ENCODE measurements at regions of chr2 and their contacts with region 1.

Region 1: GRCh38 chr2:136117909-136118818 is at the start of gene CXCR4:
- DNase-seq: peak; percentile 90
- H3K4me3 Mint-ChIP-seq: peak within 1 kb of the TSS; percentile 98
- H3K27ac Mint-ChIP-seq: peak within 1 kb of the TSS; percentile 97
- H3K4me1 Mint-ChIP-seq: peaks cover 43% of the 10 kb centered on the region
- H3K27me3 Mint-ChIP-seq: peaks cover 31% of the 10 kb centered on the region
- total RNA-seq, gene CXCR4: 202 to 212 TPM

Region 2: GRCh38 chr2:135960656-135961551 is 157.3 kb before region 1 on chr2:
- CTCF ChIA-PET with region 1: no interaction called
- POLR2A ChIA-PET with region 1: interaction called, 12 read pairs
- DNase-seq: peak; percentile 33
- H3K4me3 Mint-ChIP-seq: peak overlapping the region; percentile 53
- H3K27ac Mint-ChIP-seq: peak overlapping the region; percentile 92
- H3K4me1 Mint-ChIP-seq: peaks cover 58% of the 10 kb centered on the region
- H3K27me3 Mint-ChIP-seq: no peaks in the 10 kb centered on the region

Region 3: DNA sequence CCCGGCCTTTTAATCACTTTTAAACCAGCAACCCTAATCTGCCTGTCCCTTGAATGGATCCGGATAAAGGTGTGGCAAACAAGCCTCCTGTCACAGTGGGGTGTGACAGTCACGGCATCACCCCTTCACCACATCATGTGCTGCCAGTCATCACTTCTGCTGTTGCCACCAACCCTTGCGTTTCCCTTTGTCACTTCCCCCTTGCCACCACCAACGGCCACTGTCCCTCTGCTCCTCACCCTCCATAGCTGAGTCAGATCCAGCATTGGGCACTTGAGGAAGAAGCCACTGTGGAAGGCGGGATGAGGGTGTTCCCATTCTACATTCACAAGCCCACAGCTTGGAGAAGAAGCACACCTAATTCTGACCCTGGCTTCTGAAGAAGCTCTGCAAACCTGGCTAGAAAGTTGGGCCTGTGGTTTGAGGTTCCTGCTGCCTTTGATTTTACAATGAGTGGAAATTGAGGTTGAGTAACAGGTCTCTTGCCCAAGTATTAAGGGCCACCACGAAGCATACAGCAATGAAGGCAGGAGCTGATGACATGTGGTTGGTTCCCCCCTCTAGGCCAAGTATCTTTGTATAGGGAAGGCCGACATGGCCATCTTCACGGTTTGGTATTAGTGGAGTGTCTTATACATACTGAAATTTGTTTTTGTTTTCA is 109.8 kb before region 1 on chr2:
- CTCF ChIA-PET with region 1: no interaction called
- POLR2A ChIA-PET with region 1: interaction called, 16 read pairs
- DNase-seq: peak; percentile 90
- H3K4me3 Mint-ChIP-seq: peak overlapping the region; percentile 50
- H3K27ac Mint-ChIP-seq: peak overlapping the region; percentile 94
- H3K4me1 Mint-ChIP-seq: peaks cover 68% of the 10 kb centered on the region
- H3K27me3 Mint-ChIP-seq: no peaks in the 10 kb centered on the region

Region 4: DNA sequence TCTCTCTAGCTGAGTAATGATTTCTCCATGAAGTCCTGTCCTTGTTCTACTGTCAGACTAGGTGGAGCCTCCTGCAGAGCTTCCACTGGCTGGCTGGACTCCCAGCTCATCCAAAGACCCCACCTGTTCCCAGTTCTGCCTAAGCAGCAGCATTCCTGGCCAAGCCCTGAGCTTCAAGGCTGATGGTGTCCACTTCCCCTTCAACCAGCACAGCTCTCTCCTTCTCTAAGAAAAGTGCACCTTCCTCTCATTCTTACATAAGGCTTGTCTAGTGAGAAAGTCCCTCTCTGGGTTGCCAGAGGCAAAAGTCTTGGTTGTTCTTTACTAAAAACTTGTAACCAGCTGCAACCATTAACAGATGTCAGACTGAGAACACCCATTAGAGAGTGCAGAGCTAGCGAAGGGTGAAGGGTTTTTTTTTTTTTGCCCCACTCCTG is 59.1 kb before region 1 on chr2:
- CTCF ChIA-PET with region 1: interaction called, 3 read pairs
- POLR2A ChIA-PET with region 1: interaction called, 44 read pairs
- DNase-seq: no peak
- H3K4me3 Mint-ChIP-seq: no peak overlapping the region
- H3K27ac Mint-ChIP-seq: peak overlapping the region; percentile 36
- H3K4me1 Mint-ChIP-seq: peaks cover 54% of the 10 kb centered on the region
- H3K27me3 Mint-ChIP-seq: no peaks in the 10 kb centered on the region

Region 5: DNA sequence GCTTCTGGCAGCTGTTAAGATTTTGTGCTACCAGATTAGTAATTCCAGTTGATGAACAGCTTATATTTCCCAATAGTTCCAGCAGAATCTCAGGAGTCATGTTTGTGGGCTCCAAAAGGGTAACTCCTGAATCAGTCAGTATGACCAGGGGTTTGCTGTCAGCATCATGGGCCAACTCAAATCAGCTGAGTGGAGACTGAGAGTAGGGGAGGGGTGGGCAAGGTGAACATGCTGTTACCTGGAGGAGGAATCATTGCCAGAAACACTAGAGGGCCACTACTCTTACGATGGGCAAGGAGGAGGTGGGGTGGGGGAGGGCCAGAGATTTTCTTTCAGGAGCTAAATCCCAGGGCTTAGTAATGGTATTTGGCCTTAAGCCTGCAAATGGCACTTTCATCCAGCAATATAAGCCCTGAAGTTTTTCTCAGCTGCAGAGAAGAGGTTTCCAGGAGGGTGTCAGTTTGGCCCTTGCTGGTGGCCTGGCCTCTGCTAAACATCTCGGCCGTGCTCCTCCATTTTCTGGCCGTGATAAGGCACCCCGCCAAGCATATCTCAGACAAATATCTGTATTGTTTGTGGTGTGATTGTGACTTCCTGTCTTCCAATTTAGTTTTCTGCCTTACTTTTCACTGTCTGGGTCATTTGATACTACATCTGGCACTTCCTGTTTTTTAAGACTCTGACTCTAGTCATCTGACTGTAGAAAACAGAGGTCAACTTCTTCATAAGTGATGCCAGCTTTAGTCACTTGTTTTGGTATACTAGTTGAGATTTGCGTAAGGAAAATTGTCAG is 120.3 kb after region 1 on chr2:
- CTCF ChIA-PET with region 1: no interaction called
- POLR2A ChIA-PET with region 1: interaction called, 14 read pairs
- DNase-seq: peak; percentile 53
- H3K4me3 Mint-ChIP-seq: no peak overlapping the region
- H3K27ac Mint-ChIP-seq: peak overlapping the region; percentile 75
- H3K4me1 Mint-ChIP-seq: peaks cover 58% of the 10 kb centered on the region
- H3K27me3 Mint-ChIP-seq: no peaks in the 10 kb centered on the region

Region 6: DNA sequence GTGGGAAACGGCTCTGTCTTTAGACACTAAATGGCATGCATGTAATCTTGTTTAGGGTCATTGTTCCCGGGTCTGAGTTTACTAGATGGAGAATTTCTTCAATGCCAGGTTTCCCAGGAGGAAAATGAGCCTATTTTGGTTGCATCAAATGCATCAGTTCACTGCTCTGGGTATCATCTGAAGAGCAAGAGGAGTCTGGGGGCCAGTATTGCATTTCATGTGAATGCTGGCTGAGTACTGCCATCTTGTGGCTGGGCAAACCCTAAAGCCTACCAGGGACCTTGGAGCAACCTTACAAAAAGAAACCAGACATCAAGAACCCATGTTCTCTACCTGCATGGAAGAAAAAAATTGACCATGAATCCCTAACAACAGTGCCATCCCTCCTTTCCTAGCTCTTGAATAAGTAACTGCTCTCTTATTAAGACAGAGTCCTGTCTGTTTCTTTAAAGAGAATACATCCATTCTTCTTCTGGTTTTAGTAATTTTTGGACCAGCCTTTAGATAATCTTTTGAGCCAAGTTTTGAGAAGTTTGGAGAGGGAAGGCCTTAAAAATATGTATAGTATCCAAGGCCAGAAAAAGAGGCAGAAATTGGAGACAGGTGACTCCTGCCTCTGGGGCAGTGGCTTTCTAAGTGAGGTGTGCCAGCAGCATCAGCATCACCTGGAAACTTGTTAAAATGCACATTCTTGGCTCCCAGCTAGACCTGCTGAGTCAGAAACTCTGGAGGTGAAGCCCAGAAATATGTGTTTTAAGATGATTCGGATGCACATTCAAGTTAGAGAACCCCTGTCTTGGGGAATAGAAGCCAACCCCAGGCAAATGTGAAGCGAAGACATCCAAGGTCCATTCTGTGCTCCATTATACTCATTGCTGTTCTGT is 260.8 kb after region 1 on chr2:
- CTCF ChIA-PET with region 1: interaction called, 3 read pairs
- POLR2A ChIA-PET with region 1: interaction called, 24 read pairs
- DNase-seq: peak; percentile 82
- H3K4me3 Mint-ChIP-seq: no peak overlapping the region
- H3K27ac Mint-ChIP-seq: peak overlapping the region; percentile 37
- H3K4me1 Mint-ChIP-seq: peaks cover 87% of the 10 kb centered on the region
- H3K27me3 Mint-ChIP-seq: no peaks in the 10 kb centered on the region

Region 7: GRCh38 chr2:136384531-136385303 is 266.6 kb after region 1 on chr2:
- CTCF ChIA-PET with region 1: interaction called, 3 read pairs
- POLR2A ChIA-PET with region 1: interaction called, 16 read pairs
- DNase-seq: peak; percentile 64
- H3K4me3 Mint-ChIP-seq: peak overlapping the region; percentile 11
- H3K27ac Mint-ChIP-seq: peak overlapping the region; percentile 91
- H3K4me1 Mint-ChIP-seq: peaks cover 45% of the 10 kb centered on the region
- H3K27me3 Mint-ChIP-seq: no peaks in the 10 kb centered on the region